ENCODE measurements at regions of chr20 and their contacts with region 1.

Region 1: GRCh38 chr20:45011108-45011526 is 44.8 kb downstream of the STK4 start:
- DNase-seq: peak; percentile 24
- CTCF ChIP-seq: peak; percentile 70

Region 2: GRCh38 chr20:44997171-44998067 is 13.7 kb before region 1 on chr20:
- CTCF ChIA-PET with region 1: interaction called, 10 read pairs
- POLR2A ChIA-PET with region 1: interaction called, 3 read pairs
- DNase-seq: no peak
- CTCF ChIP-seq: no peak

Region 3: DNA sequence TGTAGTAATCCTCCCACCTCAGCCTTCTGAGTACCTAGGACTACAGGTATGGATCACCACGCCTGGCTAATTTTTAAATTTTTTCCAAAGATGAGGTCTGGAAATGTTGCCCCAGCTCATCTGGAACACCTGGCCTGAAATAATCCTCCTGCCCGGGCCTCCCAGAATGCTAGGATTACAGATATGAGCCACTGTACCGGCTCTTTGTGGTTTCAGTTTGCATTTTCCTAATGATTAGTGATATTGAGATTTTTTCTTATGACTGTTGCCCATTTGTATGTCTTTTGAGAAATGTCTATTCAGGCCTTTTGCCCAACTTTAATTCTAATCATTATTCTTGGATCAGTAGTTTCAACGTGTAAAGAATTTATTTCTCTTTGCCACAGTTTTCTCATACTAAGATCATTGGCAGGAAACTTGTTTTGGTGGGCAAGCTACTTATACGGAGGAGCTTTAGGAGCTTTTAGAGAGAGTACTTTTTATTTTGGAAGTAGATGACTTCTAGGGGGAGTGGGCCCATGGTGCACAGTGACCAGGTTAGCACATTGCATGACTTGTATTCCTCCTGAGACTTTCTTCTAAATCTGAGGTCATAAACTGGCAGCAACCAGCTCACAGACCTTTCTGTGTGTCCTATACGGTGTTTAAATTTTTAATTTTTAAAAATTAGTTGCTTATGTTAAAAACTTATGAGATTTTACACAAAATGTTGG is 17.5 kb after region 1 on chr20:
- CTCF ChIA-PET with region 1: interaction called, 13 read pairs
- POLR2A ChIA-PET with region 1: no interaction called
- DNase-seq: no peak
- CTCF ChIP-seq: no peak